HCT116 (cell line): ENCODE measurements at regions of chr12 and their contacts with region 1.

Region 1: DNA sequence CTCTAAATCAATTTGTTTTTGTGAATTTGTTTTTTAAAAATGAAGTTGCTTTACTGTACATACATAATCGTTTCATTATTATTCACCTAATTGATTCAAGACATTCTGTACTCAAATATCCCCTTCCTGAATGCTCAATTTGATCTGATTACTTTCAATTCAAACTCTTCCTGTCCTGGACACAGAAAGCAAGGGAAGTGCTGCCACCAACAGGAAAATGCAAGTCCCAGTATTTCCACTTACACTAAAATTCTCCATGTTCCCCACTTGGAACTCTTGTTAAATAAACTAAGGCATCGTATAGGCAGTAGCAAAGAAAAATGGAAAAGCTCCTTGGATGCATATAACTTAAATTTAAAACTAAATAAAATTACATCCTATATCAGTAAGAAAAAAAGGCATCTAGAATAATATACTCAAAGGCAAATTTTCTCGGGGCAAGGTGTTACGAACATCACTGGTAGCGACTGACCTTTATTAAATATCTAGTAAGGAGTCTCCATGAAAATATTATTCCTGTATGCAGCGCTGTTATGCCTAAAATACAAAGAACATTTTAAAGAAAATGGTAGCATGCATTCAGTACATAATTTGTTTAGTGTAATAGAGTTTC is 72.0 kb upstream of the DBX2 start:
- DNase-seq: peak; percentile 39
- ATAC-seq: peak; percentile 63
- H3K4me3 ChIP-seq: no peak overlapping the region
- H3K27ac ChIP-seq: no peak overlapping the region
- H3K4me1 ChIP-seq: no peaks in the 10 kb centered on the region
- H3K27me3 ChIP-seq: no peaks in the 10 kb centered on the region
- CTCF ChIP-seq: peak; percentile 63 to 85 (median 65)
- POLR2A ChIP-seq: no peak
- RAD21 ChIP-seq: peak; percentile 81

Region 2: DNA sequence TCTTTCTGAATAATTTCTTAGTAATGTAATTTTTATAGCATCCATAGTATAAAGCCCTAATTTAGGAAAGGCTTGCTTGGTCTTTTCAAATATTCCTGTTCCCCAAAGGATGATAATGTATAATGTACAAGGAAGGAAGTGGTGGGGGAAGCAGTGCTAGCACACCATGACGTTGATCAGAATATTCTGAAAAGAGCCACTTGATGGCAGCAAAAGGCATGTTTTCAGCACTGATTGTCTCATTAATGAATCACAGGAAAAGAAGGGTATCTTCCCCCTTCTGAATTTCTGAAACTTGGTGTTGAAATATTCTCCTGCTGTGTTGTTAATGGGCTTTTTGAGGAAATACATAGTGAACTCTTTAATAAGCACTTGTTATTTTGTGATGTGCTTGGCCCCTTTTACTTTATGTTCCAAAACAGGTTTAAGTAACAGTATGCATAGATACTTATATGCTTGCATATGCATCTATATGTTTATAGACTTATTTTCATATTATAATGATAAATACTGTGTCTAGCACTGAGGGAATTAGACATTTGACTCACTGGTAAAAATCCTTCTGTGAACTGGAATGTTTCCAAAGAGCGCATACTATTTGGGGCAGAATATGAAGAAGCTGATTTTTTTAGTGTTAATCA is 1165.0 kb before region 1 on chr12:
- CTCF ChIA-PET with region 1: no interaction called
- POLR2A ChIA-PET with region 1: no interaction called
- RAD21 ChIA-PET with region 1: no interaction called
- intact Hi-C with region 1: loop called (anchors 5 kb)
- DNase-seq: peak; percentile 37
- ATAC-seq: peak; percentile 88
- H3K4me3 ChIP-seq: no peak overlapping the region
- H3K27ac ChIP-seq: no peak overlapping the region
- H3K4me1 ChIP-seq: no peaks in the 10 kb centered on the region
- H3K27me3 ChIP-seq: no peaks in the 10 kb centered on the region
- CTCF ChIP-seq: peak; percentile 47 to 63 (median 59)
- POLR2A ChIP-seq: no peak
- RAD21 ChIP-seq: peak; percentile 69

Region 3: GRCh38 chr12:44465139-44465538 is 657.7 kb before region 1 on chr12:
- CTCF ChIA-PET with region 1: no interaction called
- POLR2A ChIA-PET with region 1: no interaction called
- RAD21 ChIA-PET with region 1: no interaction called
- intact Hi-C with region 1: no loop called
- DNase-seq: peak; percentile 3
- ATAC-seq: peak; percentile 74
- H3K4me3 ChIP-seq: no peak overlapping the region
- H3K27ac ChIP-seq: no peak overlapping the region
- H3K4me1 ChIP-seq: no peaks in the 10 kb centered on the region
- H3K27me3 ChIP-seq: no peaks in the 10 kb centered on the region
- CTCF ChIP-seq: peak; percentile 17 to 39 (median 25); a peak in 5 of 6 replicates
- POLR2A ChIP-seq: no peak
- RAD21 ChIP-seq: peak; percentile 33; the same call in 1 of the 2 replicates

Region 4: GRCh38 chr12:44774815-44775411 is 348.0 kb before region 1 on chr12:
- CTCF ChIA-PET with region 1: no interaction called
- POLR2A ChIA-PET with region 1: no interaction called
- RAD21 ChIA-PET with region 1: interaction called in 1 of 2 experiments, 3 read pairs
- intact Hi-C with region 1: loop called (anchors 1 kb)
- DNase-seq: peak; percentile 15
- ATAC-seq: peak; percentile 74
- H3K4me3 ChIP-seq: no peak overlapping the region
- H3K27ac ChIP-seq: no peak overlapping the region
- H3K4me1 ChIP-seq: no peaks in the 10 kb centered on the region
- H3K27me3 ChIP-seq: no peaks in the 10 kb centered on the region
- CTCF ChIP-seq: peak; percentile 42 to 96 (median 91); a peak in 5 of 6 replicates
- POLR2A ChIP-seq: no peak
- RAD21 ChIP-seq: peak; percentile 35; the same call in 1 of the 2 replicates

Region 5: DNA sequence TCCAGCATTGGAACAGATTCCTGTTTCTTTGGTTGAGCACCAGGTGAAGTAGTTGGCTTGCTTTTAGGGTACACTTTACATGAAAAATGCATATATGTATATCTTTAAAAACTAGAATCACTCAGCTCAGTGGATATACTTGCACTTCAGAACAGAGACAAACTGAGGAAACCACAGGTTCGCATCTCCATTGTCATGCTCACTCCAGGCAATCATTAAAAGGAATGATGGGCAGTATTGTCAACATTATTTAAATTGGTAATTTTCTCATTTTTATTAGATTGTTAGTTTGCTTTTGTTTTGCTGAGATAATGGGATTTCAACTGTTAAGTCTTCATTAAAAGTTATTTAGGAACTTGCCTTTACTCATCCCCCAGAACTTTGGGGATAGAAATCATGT is 175.7 kb before region 1 on chr12:
- CTCF ChIA-PET with region 1: interaction called, 11 read pairs
- POLR2A ChIA-PET with region 1: interaction called, 3 read pairs
- RAD21 ChIA-PET with region 1: no interaction called
- intact Hi-C with region 1: loop called (anchors 1 kb)
- DNase-seq: no peak
- ATAC-seq: no peak
- H3K4me3 ChIP-seq: no peak overlapping the region
- H3K27ac ChIP-seq: no peak overlapping the region
- H3K4me1 ChIP-seq: no peaks in the 10 kb centered on the region; a peak in 2 of 4 replicates
- H3K27me3 ChIP-seq: no peaks in the 10 kb centered on the region
- CTCF ChIP-seq: no peak
- POLR2A ChIP-seq: no peak
- RAD21 ChIP-seq: no peak

Region 6: DNA sequence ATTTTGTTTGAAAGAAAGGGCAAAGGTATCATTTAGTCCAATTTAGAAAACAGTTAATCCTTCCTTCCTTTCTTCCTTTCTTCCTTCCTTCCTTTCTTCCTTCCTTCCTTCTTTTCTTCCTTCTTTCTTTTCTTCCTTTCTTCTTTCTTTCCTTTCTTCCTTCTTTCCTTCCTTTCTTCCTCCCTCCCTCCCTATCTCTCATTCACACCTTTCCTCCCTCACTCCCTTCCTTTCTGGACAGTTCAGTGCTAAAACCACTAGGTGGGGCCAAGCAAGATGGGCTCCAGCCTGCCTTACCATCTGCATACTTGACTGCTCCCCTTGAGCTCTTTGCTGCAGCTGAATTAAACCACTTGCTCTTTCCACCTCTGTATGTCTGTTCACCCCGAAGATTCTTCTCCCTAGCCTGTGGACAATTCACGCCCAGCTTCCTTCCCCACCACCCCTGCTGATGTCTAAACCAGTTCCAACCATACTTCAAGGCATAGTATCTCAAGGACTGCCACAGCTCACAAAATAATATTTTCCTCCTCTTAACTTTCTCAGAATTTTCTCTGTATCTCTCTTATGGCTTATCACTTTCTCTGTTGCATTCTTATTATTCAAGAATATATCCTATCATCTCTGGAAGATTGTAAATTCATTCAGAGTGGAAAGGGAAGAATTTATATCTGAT is 150.0 kb before region 1 on chr12:
- CTCF ChIA-PET with region 1: interaction called, 17 read pairs
- POLR2A ChIA-PET with region 1: no interaction called
- RAD21 ChIA-PET with region 1: no interaction called
- intact Hi-C with region 1: loop called (anchors 2 kb)
- DNase-seq: peak; percentile 22
- ATAC-seq: peak; percentile 99
- H3K4me3 ChIP-seq: no peak overlapping the region
- H3K27ac ChIP-seq: no peak overlapping the region
- H3K4me1 ChIP-seq: no peaks in the 10 kb centered on the region
- H3K27me3 ChIP-seq: no peaks in the 10 kb centered on the region
- CTCF ChIP-seq: peak; percentile 22 to 84 (median 69); a peak in 4 of 6 replicates
- POLR2A ChIP-seq: no peak
- RAD21 ChIP-seq: peak; percentile 33